Dendritic cell treated with granulocyte-macrophage colony-stimulating factor and Interleukin-4, amounts not matched to agents 40 ng/mL and 50 ng/mL, for 4 days (primary cell): ENCODE measurements at regions of chr6 and their contacts with region 1.

Region 1: GRCh38 chr6:63663147-63663877 is 27.7 kb downstream of the PHF3 start:
- H3K4me3 Mint-ChIP-seq: no peak overlapping the region
- H3K27ac Mint-ChIP-seq: no peak overlapping the region
- H3K4me1 Mint-ChIP-seq: peaks cover 18% of the 10 kb centered on the region
- H3K27me3 Mint-ChIP-seq: no peaks in the 10 kb centered on the region

Region 2: GRCh38 chr6:63677282-63677681 is 14.0 kb after region 1 on chr6:
- intact Hi-C with region 1: loop called (anchors 1 kb)
- H3K4me3 Mint-ChIP-seq: no peak overlapping the region
- H3K27ac Mint-ChIP-seq: no peak overlapping the region
- H3K4me1 Mint-ChIP-seq: peaks cover 23% of the 10 kb centered on the region
- H3K27me3 Mint-ChIP-seq: no peaks in the 10 kb centered on the region